Caco-2 (cell line): ENCODE measurements at regions of chr13 and their contacts with region 1.

Region 1: DNA sequence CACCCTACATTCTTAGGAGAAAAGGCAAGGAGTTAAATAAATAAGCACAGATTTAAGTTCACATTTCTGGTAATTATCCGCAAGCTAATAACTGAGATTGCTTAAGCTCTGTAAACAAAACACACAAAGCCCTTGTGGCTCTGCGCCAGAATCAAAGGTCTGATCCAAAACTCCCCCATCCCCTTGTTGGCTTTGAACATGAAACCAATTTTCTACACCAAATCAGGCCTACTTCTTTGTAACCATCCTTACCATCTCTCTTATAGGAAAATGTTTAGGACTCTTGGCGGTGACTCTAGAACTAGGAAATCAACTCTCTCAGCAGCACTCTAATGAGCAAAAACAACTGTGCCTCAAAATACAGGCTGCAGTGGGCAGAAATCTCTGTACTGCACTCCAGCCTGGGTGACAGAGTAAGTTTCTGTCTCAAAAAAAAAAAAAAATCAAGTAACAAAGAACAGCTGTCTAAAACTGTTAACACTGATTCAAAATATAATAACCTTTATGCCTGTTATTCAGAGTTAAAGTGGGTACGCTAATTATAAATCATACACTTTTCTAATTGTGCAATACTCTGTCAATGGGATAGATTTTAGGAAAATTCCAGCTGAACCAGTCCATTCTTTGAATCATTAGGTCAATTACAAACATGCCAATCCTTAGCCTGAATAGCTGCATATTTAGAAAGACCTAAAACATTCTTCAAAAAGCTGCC is 25.8 kb downstream of the ABCC4 start:
- DNase-seq: peak in 1 of 2 experiments; percentile 62
- H3K4me3 ChIP-seq: no peak overlapping the region
- H3K4me3 Mint-ChIP-seq: peak overlapping the region; percentile 50
- H3K27ac Mint-ChIP-seq: peak overlapping the region; percentile 61
- H3K4me1 ChIP-seq: peaks cover 65% of the 10 kb centered on the region
- H3K4me1 Mint-ChIP-seq: peaks cover 64% of the 10 kb centered on the region
- H3K27me3 ChIP-seq: no peaks in the 10 kb centered on the region
- H3K27me3 Mint-ChIP-seq: no peaks in the 10 kb centered on the region
- CTCF ChIP-seq: no peak

Region 2: GRCh38 chr13:95226932-95227695 is 48.4 kb before region 1 on chr13:
- CTCF ChIA-PET with region 1: no interaction called
- POLR2A ChIA-PET with region 1: no interaction called
- intact Hi-C with region 1: loop called (anchors 2 kb)
- DNase-seq: no peak
- H3K4me3 ChIP-seq: no peak overlapping the region
- H3K4me3 Mint-ChIP-seq: no peak overlapping the region
- H3K27ac Mint-ChIP-seq: no peak overlapping the region
- H3K4me1 ChIP-seq: peaks cover 8% of the 10 kb centered on the region
- H3K4me1 Mint-ChIP-seq: no peaks in the 10 kb centered on the region
- H3K27me3 ChIP-seq: no peaks in the 10 kb centered on the region
- H3K27me3 Mint-ChIP-seq: no peaks in the 10 kb centered on the region
- CTCF ChIP-seq: no peak

Region 3: GRCh38 chr13:95251641-95252040 is 23.8 kb before region 1 on chr13:
- CTCF ChIA-PET with region 1: no interaction called
- POLR2A ChIA-PET with region 1: no interaction called
- intact Hi-C with region 1: loop called (anchors 1 kb)
- DNase-seq: no peak
- H3K4me3 ChIP-seq: no peak overlapping the region
- H3K4me3 Mint-ChIP-seq: no peak overlapping the region
- H3K27ac Mint-ChIP-seq: no peak overlapping the region
- H3K4me1 ChIP-seq: peaks cover 43% of the 10 kb centered on the region
- H3K4me1 Mint-ChIP-seq: peaks cover 29% of the 10 kb centered on the region
- H3K27me3 ChIP-seq: no peaks in the 10 kb centered on the region; the same call in 1 of the 2 replicates
- H3K27me3 Mint-ChIP-seq: no peaks in the 10 kb centered on the region
- CTCF ChIP-seq: no peak